HEK293 (cell line): ENCODE measurements at regions of chr4 and their contacts with region 1.

Region 1: GRCh38 chr4:17544205-17544604 is 29.2 kb downstream of the CLRN2 start:
- H3K4me3 ChIP-seq: no peak overlapping the region
- H3K27ac ChIP-seq: no peak overlapping the region
- H3K4me1 ChIP-seq: no peaks in the 10 kb centered on the region
- CTCF ChIP-seq: no peak

Region 2: GRCh38 chr4:17327591-17327990 is 216.6 kb before region 1 on chr4:
- CTCF ChIA-PET with region 1: no interaction called
- POLR2A ChIA-PET with region 1: no interaction called
- H3K4me3 ChIP-seq: no peak overlapping the region
- H3K27ac ChIP-seq: no peak overlapping the region
- H3K4me1 ChIP-seq: no peaks in the 10 kb centered on the region
- CTCF ChIP-seq: no peak

Region 3: DNA sequence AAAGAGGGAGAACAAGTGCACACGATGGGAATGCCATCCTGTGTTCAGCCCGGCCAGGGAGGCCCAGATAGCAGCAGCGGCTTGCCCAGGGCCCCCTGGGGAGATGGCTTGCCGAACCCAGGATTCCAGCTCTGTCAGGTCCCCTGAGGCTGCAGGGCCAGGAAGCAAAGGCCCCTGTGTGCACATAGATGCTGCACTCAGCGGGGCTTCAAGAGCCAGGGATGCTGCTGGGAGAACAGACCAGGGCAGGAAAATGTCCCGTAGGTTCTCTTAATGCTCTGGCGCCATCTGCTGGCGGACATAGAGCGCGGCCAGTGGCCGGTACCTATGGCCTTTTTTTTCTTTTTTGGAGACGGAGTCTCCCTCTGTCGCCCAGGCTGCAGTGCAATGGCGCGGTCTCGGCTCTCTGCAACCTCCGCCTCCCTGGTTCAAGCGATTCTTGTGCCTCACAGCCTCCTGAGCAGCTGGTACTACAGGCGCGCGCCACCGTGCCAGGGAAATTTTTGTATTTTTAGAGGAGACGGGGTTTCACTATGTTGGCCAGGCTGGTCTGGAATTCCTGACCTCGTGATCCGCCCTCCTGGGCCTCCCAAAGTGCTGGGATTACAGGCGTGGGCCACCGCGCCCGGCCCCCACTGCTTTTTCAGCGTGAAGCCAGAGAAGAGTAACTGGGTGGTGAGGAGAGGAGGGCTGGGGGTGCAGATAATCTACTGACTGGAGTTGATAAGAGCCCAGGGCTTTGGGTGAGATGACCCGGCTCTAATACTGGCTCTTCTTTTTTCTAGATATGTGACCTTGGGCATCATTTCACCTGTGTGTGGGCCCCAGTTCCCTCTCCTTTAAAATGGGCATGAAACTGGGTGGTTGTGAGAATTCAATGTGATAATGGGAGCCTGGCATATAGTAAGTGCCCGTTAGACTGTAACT is 92.8 kb after region 1 on chr4:
- CTCF ChIA-PET with region 1: interaction called, 11 read pairs
- POLR2A ChIA-PET with region 1: no interaction called
- H3K4me3 ChIP-seq: no peak overlapping the region
- H3K27ac ChIP-seq: no peak overlapping the region
- H3K4me1 ChIP-seq: no peaks in the 10 kb centered on the region
- CTCF ChIP-seq: peak; percentile 48

Region 4: GRCh38 chr4:17807451-17807850 is 263.2 kb after region 1 on chr4:
- CTCF ChIA-PET with region 1: interaction called, 18 read pairs
- POLR2A ChIA-PET with region 1: no interaction called
- H3K4me3 ChIP-seq: no peak overlapping the region
- H3K27ac ChIP-seq: no peak overlapping the region
- H3K4me1 ChIP-seq: no peaks in the 10 kb centered on the region
- CTCF ChIP-seq: no peak